ENCODE measurements at regions of chr6 and their contacts with region 1.

Region 1: GRCh38 chr6:27893059-27893835 is 18.9 kb downstream of the OR2B2 start:
- DNase-seq: peak in 3 of 5 donors; percentile 29 to 48 (median 38)
- H3K4me3 ChIP-seq: peak overlapping the region; percentile 59
- H3K27ac ChIP-seq: no peak overlapping the region
- H3K4me1 ChIP-seq: peaks cover 15% of the 10 kb centered on the region
- H3K27me3 ChIP-seq: no peaks in the 10 kb centered on the region
- CTCF ChIP-seq: no peak
- EP300 ChIP-seq: no peak
- POLR2A ChIP-seq: no peak

Region 2: DNA sequence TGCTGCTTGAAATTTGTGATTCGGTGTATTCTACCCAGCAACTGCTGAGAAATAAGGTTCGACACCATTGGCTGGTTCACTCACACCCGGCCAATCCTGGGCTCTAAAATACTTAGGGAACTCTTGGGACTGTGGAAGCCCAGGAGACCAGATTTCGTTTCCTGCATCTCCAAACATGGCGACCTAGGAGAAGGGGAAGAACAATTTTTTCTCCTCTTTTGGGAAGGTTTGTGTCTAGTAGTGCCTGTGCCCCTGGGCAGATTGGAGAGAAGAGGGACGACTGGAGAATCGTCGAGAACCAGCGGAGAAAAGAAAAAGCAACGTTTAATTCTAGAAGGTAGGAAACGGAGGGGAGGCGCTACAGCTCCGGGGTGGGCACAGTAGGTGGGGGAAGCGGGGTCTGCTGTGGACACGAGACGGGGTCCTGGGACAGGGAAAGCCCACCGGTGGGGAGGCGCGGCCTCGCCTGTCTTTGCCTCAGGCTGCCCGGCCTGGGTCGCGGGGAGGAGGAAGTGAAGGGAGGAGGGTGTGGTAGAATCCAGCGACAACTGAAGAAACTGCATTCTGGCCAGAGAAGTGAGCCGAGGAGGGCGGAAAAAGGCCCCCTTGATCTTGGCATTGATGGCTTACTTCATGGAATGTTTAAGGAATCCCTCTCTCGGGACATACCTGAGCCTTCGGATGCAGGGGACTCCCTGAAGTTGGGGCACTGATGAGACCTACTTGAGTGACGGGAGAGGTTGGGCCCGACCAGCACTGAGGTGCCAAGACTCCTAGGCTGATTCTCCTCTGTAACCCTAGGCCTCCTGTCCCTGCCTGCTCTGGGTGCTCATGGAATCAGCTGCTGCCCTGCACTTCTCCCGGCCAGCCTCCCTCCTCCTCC is 1435.2 kb before region 1 on chr6 and contains the start of gene BTN2A1:
- intact Hi-C with region 1: no loop called
- DNase-seq: peak; percentile 66 to 82 (median 68)
- H3K4me3 ChIP-seq: peak within 1 kb of the TSS; percentile 81
- H3K27ac ChIP-seq: peak within 1 kb of the TSS; percentile 32 to 82
- H3K4me1 ChIP-seq: peaks cover 12% of the 10 kb centered on the region
- H3K27me3 ChIP-seq: no peaks in the 10 kb centered on the region
- CTCF ChIP-seq: no peak
- EP300 ChIP-seq: no peak
- POLR2A ChIP-seq: no peak
- total RNA-seq, gene BTN2A1: 9.0 to 23.2 (median 17.7) TPM

Region 3: GRCh38 chr6:27157459-27158315 is 735.6 kb before region 1 on chr6:
- intact Hi-C with region 1: loop called in 1 of 4 experiments (anchors 10 kb)
- DNase-seq: peak; percentile 62 to 85 (median 77)
- H3K4me3 ChIP-seq: peak overlapping the region; percentile 36
- H3K27ac ChIP-seq: peak overlapping the region in 1 of 2 donors; percentile 47
- H3K4me1 ChIP-seq: no peaks in the 10 kb centered on the region
- H3K27me3 ChIP-seq: no peaks in the 10 kb centered on the region
- CTCF ChIP-seq: peak in 2 of 3 donors; percentile 52 to 53
- EP300 ChIP-seq: no peak
- POLR2A ChIP-seq: no peak

Region 4: GRCh38 chr6:27188885-27189418 is 704.3 kb before region 1 on chr6:
- intact Hi-C with region 1: loop called in 2 of 4 experiments (anchors 5 to 10 kb)
- DNase-seq: peak; percentile 38 to 62 (median 56)
- H3K4me3 ChIP-seq: peak overlapping the region; percentile 48
- H3K27ac ChIP-seq: peak overlapping the region; percentile 26 to 68
- H3K4me1 ChIP-seq: no peaks in the 10 kb centered on the region
- H3K27me3 ChIP-seq: no peaks in the 10 kb centered on the region
- CTCF ChIP-seq: peak; percentile 51 to 58 (median 54)
- EP300 ChIP-seq: no peak
- POLR2A ChIP-seq: no peak

Region 5: GRCh38 chr6:27518881-27519795 is 374.1 kb before region 1 on chr6:
- intact Hi-C with region 1: loop called in 1 of 4 experiments (anchors 10 kb)
- DNase-seq: peak; percentile 63 to 75 (median 74)
- H3K4me3 ChIP-seq: peak overlapping the region; percentile 68
- H3K27ac ChIP-seq: peak overlapping the region; percentile 53 to 89
- H3K4me1 ChIP-seq: no peaks in the 10 kb centered on the region
- H3K27me3 ChIP-seq: no peaks in the 10 kb centered on the region
- CTCF ChIP-seq: peak; percentile 66 to 79 (median 68)
- EP300 ChIP-seq: no peak
- POLR2A ChIP-seq: no peak

Region 6: GRCh38 chr6:27562027-27562410 is 331.2 kb before region 1 on chr6:
- intact Hi-C with region 1: no loop called
- DNase-seq: no peak
- H3K4me3 ChIP-seq: no peak overlapping the region
- H3K27ac ChIP-seq: no peak overlapping the region
- H3K4me1 ChIP-seq: no peaks in the 10 kb centered on the region
- H3K27me3 ChIP-seq: no peaks in the 10 kb centered on the region
- CTCF ChIP-seq: no peak
- EP300 ChIP-seq: no peak
- POLR2A ChIP-seq: no peak

Region 7: GRCh38 chr6:27700337-27700736 is 192.9 kb before region 1 on chr6:
- intact Hi-C with region 1: no loop called
- DNase-seq: no peak
- H3K4me3 ChIP-seq: no peak overlapping the region
- H3K27ac ChIP-seq: no peak overlapping the region
- H3K4me1 ChIP-seq: no peaks in the 10 kb centered on the region
- H3K27me3 ChIP-seq: no peaks in the 10 kb centered on the region
- CTCF ChIP-seq: no peak
- EP300 ChIP-seq: no peak
- POLR2A ChIP-seq: no peak

Region 8: GRCh38 chr6:27765028-27765590 is 128.1 kb before region 1 on chr6:
- intact Hi-C with region 1: loop called in 1 of 4 experiments (anchors 5 kb)
- DNase-seq: no peak
- H3K4me3 ChIP-seq: no peak overlapping the region
- H3K27ac ChIP-seq: no peak overlapping the region
- H3K4me1 ChIP-seq: no peaks in the 10 kb centered on the region
- H3K27me3 ChIP-seq: no peaks in the 10 kb centered on the region
- CTCF ChIP-seq: no peak
- EP300 ChIP-seq: no peak
- POLR2A ChIP-seq: no peak

Region 9: GRCh38 chr6:27772261-27773001 is 120.8 kb before region 1 on chr6:
- intact Hi-C with region 1: loop called in 2 of 4 experiments (anchors 2 to 5 kb)
- DNase-seq: peak; percentile 71 to 91 (median 82)
- H3K4me3 ChIP-seq: no peak overlapping the region
- H3K27ac ChIP-seq: no peak overlapping the region
- H3K4me1 ChIP-seq: peaks cover 3% of the 10 kb centered on the region
- H3K27me3 ChIP-seq: no peaks in the 10 kb centered on the region
- CTCF ChIP-seq: peak; percentile 77 to 84 (median 78)
- EP300 ChIP-seq: no peak
- POLR2A ChIP-seq: no peak

Region 10: DNA sequence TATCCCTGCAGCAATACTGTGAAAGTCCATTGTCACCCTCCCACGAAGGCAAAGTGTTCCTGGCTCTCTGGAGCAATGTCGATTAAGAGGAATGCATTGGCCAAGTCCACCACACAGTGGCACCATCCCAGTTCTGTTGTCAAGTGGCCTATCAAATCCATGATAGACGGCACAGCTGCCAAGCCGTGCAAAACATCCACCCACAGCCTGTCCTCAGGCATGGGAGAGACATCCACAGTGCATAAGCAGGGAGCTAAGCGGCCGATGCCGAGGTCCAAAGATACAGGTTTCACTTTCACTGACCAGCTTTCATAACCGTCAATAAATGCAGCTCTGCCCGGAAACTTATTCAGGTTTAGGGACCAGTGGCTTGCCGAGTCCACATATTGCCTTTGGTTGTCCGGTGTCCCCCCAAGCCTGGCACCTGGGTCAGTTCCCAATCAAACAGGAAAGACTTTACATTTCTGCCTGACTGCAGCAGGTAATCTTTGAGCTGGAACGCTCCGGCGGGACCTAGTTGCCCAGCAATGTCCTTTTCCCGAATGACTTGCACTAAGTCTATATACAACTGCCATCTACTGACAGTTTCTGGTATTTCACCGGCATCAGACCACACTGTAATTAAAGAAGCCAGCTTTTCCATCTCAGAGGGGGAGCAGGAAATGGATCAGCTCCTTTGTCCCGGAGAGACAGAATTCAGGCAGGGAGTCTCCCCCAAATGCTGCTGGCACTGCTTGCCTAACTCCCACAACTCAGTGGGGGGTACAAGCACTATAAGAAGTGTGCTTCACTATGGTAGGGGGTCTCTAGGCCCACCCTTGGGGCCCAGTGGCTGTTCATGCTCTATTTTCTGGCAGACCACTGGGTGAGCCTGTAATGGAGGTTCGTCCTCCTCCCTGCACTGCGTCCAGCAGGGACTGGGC is 462.8 kb after region 1 on chr6:
- intact Hi-C with region 1: loop called in 1 of 4 experiments (anchors 10 kb)
- DNase-seq: peak; percentile 70 to 80 (median 72)
- H3K4me3 ChIP-seq: peak overlapping the region; percentile 56
- H3K27ac ChIP-seq: peak overlapping the region; percentile 26 to 75
- H3K4me1 ChIP-seq: peaks cover 4% of the 10 kb centered on the region
- H3K27me3 ChIP-seq: no peaks in the 10 kb centered on the region
- CTCF ChIP-seq: peak; percentile 73 to 82 (median 80)
- EP300 ChIP-seq: no peak
- POLR2A ChIP-seq: no peak